ENCODE measurements at regions of chr5 and their contacts with region 1.

Region 1: DNA sequence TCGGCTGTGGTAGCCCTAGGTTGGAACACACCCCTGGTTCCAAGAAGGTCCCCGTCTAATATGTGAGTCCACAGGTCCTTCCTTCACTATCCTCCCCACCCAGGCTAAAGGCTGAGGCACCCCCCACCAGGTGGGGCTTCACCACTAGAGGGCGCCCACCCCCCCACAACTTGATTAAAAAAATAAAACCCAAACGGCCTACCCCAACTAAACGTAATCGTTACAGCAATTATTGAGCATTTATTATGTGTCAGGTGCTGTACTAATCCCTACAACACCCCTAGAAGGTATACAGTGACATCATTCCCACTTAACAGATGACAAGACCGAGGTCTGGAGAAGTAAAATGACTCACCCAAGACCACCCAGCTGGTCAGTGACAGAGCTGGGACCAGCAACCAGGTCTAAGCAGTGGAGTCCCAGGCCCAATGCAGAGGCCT is 65.0 kb downstream of the FGF18 start:
- DNase-seq: peak; percentile 34 to 59 (median 53)
- H3K4me3 ChIP-seq: no peak overlapping the region
- H3K27ac ChIP-seq: no peak overlapping the region
- H3K4me1 ChIP-seq: peaks cover 0 to 5% (median 4%) of the 10 kb centered on the region in 4 experiments
- H3K27me3 ChIP-seq: peaks cover 0 to 12% (median 0%) of the 10 kb centered on the region in 5 experiments

Region 2: DNA sequence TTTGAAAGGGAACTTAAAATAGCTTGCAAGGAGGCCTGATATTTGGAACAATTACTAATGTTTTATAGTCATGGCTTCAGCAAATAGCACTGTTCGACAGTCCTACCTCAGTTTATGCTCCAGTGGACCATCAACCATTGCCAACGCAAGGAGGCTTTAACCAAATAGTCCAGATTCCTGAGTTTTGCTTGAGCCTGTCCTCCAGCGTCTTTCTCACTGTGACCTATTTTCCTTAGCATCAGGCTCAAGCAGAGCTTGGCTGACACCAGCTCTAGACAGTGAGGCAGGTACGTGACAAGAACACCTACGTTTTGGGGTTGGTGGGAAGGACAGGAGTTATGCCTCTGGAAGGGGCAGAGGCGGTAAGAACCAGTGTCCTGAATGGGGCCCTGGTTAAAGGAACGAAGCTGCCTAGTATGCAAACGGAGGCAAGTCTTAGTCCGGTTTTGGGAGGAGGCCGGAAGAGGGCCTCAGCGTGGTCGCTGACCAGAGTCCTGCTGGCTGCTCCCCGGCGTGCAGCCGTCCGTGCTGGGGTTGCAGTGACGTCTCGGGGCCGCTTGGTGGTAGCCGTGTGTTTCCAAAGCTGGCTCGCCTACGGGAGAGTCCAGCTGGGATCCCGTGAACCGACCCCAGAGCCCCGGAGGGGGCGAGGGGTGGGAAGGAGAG is 66.0 kb before region 1 on chr5:
- CTCF ChIA-PET with region 1: interaction called, 14 read pairs
- POLR2A ChIA-PET with region 1: no interaction called
- DNase-seq: peak; percentile 46 to 62 (median 61)
- H3K4me3 ChIP-seq: peak overlapping the region; percentile 19 to 83 (median 57)
- H3K27ac ChIP-seq: no peak overlapping the region
- H3K4me1 ChIP-seq: peaks cover 0 to 28% (median 25%) of the 10 kb centered on the region in 4 experiments
- H3K27me3 ChIP-seq: peaks cover 0 to 25% (median 10%) of the 10 kb centered on the region in 5 experiments

Region 3: DNA sequence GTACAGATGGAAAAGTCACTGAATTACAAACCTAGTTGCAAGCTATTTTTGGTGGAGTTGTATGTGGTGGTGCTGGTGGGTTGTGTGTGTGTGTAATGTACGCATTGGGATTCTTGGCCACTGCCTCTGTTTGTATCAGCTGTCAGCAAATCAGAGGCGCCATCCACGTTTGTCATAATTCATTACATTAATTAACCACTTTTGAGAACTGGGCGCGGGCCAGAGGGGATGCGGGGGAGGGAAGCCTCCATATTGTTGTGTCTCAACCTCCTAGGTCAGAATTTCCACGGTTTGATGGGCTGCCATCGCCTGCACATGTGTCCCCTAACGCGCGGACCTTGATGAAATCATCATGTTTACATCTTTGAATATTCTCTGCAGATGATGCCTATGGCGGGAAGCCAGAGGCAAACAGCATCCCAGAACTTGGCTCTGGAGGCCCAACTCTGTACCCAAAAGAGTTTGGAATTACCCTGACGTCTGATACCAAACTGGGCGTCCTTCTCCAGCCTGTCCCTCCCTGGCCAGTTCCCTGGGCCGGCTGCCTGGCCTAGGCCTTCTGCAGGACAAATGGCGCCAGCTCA is 10.2 kb before region 1 on chr5:
- CTCF ChIA-PET with region 1: interaction called, 33 read pairs
- POLR2A ChIA-PET with region 1: no interaction called
- DNase-seq: no peak
- H3K4me3 ChIP-seq: no peak overlapping the region
- H3K27ac ChIP-seq: no peak overlapping the region
- H3K4me1 ChIP-seq: peaks cover 0 to 17% (median 8%) of the 10 kb centered on the region in 4 experiments
- H3K27me3 ChIP-seq: peaks cover 0 to 5% (median 0%) of the 10 kb centered on the region in 5 experiments

Region 4: DNA sequence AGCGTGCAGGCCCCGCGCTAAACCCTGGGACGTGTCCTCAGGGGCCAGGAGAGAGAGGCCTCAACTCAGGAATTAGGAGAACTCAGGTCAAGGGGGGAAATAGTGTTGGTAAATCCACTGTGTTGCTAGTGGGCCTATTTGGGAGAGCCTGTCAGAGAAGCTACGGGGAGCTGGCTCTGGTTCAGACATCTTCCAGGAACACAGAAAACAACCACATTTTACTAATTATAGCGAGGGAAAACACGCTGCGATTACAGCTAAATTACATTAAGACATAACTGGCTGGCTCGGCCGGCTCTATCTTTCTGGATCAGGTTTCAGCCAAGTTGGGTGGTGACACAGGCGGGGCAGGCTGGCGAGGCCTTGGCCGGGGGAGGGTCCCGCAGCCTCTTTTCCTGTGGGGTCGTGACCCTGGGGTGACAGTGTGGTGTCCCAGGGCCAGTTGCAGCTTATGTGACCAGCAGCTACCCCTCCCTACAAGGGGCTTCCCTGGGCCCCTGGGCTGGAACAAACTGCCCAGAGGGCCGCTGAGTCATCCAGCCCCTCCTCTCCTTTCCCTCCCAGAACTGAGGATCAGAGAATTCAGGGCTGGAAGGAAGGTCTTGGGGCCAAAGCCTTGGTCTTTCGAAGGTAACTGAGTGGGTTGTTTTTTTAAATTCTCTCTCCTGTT is 10.1 kb after region 1 on chr5:
- CTCF ChIA-PET with region 1: interaction called, 38 read pairs
- POLR2A ChIA-PET with region 1: interaction called, 3 read pairs
- DNase-seq: peak; percentile 20 to 79 (median 69)
- H3K4me3 ChIP-seq: peak overlapping the region in 1 of 7 experiments; percentile 32
- H3K27ac ChIP-seq: peak overlapping the region in 1 of 2 experiments; percentile 60
- H3K4me1 ChIP-seq: peaks cover 0 to 17% (median 10%) of the 10 kb centered on the region in 4 experiments
- H3K27me3 ChIP-seq: no peaks in the 10 kb centered on the region

Region 5: DNA sequence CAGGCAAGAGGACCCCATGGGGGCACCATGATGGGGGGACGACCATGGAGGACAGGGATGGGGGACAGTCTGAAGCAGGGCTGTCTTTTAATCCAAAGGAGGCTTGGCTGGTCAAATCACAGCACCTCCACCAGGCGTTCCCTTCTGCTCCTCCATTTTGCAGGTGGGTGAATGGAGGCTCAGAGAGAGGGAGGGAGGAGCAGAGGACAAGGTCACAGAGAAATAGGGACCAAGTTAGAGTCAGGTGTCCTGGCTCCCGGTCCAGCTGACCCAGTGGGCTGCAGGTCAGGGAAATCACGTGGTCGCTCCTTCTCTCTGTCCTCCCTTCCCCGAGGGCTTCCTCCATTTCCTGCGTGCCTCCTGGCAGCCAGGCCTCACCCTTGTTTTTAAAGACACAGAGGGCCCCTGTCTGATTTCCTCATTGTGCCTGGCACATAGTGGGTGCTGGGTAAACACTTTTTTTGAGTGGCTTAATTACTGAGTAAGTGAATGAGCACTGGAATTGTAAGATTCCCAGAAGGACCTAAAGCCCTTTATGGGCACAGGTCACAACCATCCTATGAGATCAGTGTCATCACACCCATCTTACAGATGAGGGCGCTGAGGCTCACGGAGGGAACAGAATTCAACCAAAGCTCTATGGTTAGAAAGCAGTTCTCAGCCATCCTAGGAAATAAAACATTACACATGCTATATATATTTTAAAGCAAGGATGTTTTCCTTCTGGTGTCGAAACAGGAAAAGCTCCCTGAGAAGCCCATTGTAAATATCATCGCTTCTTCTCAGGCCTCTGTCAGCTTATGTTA is 144.9 kb after region 1 on chr5:
- CTCF ChIA-PET with region 1: no interaction called
- POLR2A ChIA-PET with region 1: no interaction called
- DNase-seq: no peak
- H3K4me3 ChIP-seq: peak overlapping the region in 3 of 7 experiments; percentile 17 to 43 (median 26)
- H3K27ac ChIP-seq: no peak overlapping the region
- H3K4me1 ChIP-seq: peaks cover 15 to 41% (median 34%) of the 10 kb centered on the region in 4 experiments
- H3K27me3 ChIP-seq: no peaks in the 10 kb centered on the region

Region 6: DNA sequence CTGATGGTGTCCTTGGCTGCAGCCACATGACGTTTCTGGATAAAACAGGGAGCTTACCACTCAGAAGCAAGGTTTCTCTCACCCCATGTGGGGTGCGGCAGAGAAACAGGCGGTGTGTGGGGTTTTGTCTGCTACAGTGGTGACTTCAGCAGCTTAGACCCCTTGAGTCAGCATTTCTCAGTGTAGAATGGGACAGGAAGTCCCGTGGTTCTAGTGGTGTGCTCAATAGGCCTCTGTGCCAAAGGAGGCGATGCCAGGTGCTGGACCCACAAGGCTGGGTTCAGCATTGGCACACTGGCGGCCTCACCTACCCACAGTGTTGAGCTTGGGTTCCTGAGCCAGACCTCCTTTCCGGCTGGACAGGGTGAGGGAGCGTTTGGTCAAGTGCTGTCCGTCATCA is 176.0 kb after region 1 on chr5:
- CTCF ChIA-PET with region 1: no interaction called
- POLR2A ChIA-PET with region 1: no interaction called
- DNase-seq: peak; percentile 65 to 91 (median 89)
- H3K4me3 ChIP-seq: no peak overlapping the region
- H3K27ac ChIP-seq: no peak overlapping the region
- H3K4me1 ChIP-seq: peaks cover 0 to 15% (median 11%) of the 10 kb centered on the region in 4 experiments
- H3K27me3 ChIP-seq: no peaks in the 10 kb centered on the region

Region 7: GRCh38 chr5:171907725-171908343 is 423.4 kb after region 1 on chr5:
- CTCF ChIA-PET with region 1: interaction called, 11 read pairs
- POLR2A ChIA-PET with region 1: no interaction called
- DNase-seq: peak; percentile 74 to 89 (median 84)
- H3K4me3 ChIP-seq: no peak overlapping the region
- H3K27ac ChIP-seq: no peak overlapping the region
- H3K4me1 ChIP-seq: peaks cover 17 to 45% (median 23%) of the 10 kb centered on the region in 4 experiments
- H3K27me3 ChIP-seq: no peaks in the 10 kb centered on the region

Region 8: DNA sequence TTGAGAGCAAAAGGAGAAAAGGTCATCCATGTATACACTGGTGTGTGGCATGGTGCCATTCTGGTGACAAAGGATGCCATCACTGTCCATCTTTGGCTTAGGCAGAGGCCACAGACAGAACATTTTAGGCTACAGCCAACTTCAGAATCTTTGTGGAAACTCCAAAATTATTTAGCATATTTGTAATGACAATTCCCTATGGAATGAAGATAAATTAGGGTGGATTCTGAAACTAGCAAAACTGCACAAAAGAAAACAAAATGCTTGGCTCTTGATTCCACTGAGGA is 429.4 kb after region 1 on chr5:
- CTCF ChIA-PET with region 1: interaction called, 11 read pairs
- POLR2A ChIA-PET with region 1: no interaction called
- DNase-seq: no peak
- H3K4me3 ChIP-seq: no peak overlapping the region
- H3K27ac ChIP-seq: no peak overlapping the region
- H3K4me1 ChIP-seq: peaks cover 2 to 21% (median 7%) of the 10 kb centered on the region in 4 experiments
- H3K27me3 ChIP-seq: no peaks in the 10 kb centered on the region

Measured in common myeloid progenitor, CD34-positive (primary cell).